Motor neuron (in vitro differentiated cells): ENCODE measurements at regions of chr1 and their contacts with region 1.

Region 1: DNA sequence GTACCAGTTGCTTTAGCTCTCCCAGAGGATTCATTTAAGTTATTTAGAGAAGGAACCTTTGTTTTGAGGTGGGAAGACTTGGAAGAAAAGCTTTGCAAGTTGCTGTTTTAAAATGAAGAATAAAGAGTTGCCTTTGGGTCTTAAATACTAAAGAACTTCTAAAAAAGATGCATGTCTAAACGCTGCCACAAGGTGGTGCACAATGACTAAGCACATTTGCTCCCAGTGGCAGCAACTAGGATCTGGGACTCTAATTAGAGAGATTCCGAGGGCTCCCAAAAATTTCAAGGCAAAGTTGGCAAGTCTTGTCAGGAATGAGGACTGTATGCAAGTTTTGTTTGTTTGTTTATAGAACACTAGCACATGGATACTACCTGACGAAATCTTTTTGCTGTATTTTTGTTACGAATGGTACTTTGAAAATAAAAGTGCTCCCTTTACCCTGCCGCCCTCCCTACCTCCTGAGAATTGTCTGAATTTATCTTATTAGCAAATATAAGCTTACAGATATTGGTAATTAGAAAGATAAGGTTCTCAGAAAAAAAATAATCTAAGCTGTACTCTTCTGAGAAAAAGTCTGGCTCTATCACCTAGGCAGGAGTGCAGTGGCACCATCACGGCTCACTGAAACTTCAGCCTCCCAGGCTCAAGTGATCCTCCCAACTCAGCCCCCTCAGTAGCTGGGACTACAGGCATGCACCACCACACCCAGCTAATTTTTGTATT is 121.8 kb downstream of the HFM1 start:
- ATAC-seq: peak in 7 of 8 experiments; percentile 47 to 82 (median 55)
- H3K4me3 ChIP-seq: no peak overlapping the region
- H3K27ac ChIP-seq: no peak overlapping the region
- H3K4me1 ChIP-seq: no peaks in the 10 kb centered on the region

Region 2: GRCh38 chr1:91104712-91105111 is 178.1 kb before region 1 on chr1:
- in situ Hi-C with region 1: no loop called
- ATAC-seq: no peak
- H3K4me3 ChIP-seq: no peak overlapping the region
- H3K27ac ChIP-seq: no peak overlapping the region
- H3K4me1 ChIP-seq: no peaks in the 10 kb centered on the region

Region 3: DNA sequence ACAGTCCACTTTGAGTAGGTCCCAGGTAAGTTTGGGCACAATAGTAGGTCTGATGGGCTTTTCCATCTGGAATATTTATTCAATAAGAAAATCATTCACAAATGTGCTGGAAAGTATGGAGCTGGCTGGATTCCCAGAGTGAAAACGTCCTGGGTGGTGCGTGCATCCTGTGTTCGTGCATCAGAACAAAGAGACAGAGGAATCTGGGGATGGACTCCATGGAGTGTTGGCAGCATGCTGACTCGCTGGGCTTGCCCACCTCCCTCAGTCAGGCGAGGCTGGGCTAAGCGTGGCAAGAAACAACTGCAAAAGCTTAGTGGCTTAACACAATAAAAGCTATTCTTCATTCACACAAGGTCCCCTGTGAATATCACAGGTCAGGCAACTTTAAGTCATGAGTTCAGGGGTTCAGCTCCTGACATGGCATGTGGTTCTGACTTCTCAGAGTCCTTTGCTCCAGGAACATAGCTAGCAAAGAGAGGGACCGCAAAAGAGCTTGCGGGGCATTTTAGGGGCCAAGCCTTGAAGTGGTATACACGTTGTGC is 109.4 kb before region 1 on chr1:
- in situ Hi-C with region 1: loop called in 1 of 9 experiments (anchors 10 kb)
- ATAC-seq: peak in 1 of 8 experiments; percentile 41
- H3K4me3 ChIP-seq: no peak overlapping the region
- H3K27ac ChIP-seq: no peak overlapping the region
- H3K4me1 ChIP-seq: no peaks in the 10 kb centered on the region

Region 4: GRCh38 chr1:91404151-91405012 is 121.5 kb after region 1 on chr1 and contains the start of gene HFM1:
- in situ Hi-C with region 1: loop called in 1 of 9 experiments (anchors 25 kb)
- ATAC-seq: peak; percentile 94 to 98 (median 97)
- H3K4me3 ChIP-seq: peak within 1 kb of the TSS; percentile 69 to 91 (median 75)
- H3K27ac ChIP-seq: peak within 1 kb of the TSS; percentile 91
- H3K4me1 ChIP-seq: peaks cover 9 to 24% of the 10 kb centered on the region in 2 donors
- total RNA-seq, gene HFM1: 0.46 to 27.5 (median 10.7) TPM

Region 5: DNA sequence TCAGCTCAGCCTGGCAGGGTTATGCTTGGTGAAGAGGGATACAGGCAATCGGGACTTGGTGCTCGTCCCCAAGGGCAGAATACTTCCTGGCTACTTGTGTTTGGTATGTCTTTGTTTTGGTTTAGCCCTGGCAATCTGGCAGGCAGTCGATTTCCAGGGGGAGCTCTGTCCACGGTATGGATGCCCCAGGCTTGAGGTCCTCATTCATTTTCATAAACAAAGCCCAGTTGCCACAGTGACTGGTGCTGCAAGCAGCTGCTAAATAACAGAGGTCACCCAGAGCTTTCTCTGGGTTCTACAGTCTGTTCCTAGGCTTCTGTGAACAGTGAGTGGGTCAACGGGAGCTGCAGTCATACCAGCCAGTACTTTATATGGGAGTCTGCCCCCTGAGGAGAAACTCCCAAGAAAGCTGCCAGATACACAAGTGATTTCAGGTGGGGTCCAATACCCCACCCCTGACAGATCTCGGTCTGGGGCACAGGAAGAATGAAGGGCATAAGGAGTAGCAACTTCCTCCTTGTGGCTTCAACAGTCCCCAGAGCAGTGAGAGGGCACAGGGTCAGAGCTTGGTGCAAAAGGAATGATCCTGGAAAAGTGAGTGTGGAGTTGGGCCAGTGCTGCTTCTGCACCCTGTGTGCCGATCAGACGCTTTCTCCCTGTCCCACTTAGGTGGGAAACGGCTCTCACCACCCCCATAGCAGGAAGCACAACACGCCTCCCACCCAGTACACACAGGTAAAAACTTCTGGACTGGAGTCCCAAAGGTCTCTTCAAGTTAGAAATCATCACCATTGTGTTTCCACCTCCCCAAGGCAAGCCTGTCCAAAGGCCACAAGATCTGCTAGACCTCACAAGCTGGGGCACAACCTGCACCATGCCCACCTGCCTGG is 547.6 kb after region 1 on chr1:
- in situ Hi-C with region 1: no loop called
- ATAC-seq: peak; percentile 40 to 97 (median 80)
- H3K4me3 ChIP-seq: no peak overlapping the region
- H3K27ac ChIP-seq: no peak overlapping the region
- H3K4me1 ChIP-seq: peaks cover 0 to 14% of the 10 kb centered on the region in 2 donors

Region 6: GRCh38 chr1:91929250-91929649 is 646.4 kb after region 1 on chr1:
- in situ Hi-C with region 1: loop called in 1 of 9 experiments (anchors 25 kb)
- ATAC-seq: peak in 3 of 8 experiments; percentile 81 to 92 (median 82)
- H3K4me3 ChIP-seq: no peak overlapping the region
- H3K27ac ChIP-seq: no peak overlapping the region
- H3K4me1 ChIP-seq: no peaks in the 10 kb centered on the region